Activated CD8-positive, alpha-beta T cell treated with anti-CD3 and anti-CD28 coated beads for 36 hours (primary cell): ENCODE measurements at regions of chr2 and their contacts with region 1.

Region 1: DNA sequence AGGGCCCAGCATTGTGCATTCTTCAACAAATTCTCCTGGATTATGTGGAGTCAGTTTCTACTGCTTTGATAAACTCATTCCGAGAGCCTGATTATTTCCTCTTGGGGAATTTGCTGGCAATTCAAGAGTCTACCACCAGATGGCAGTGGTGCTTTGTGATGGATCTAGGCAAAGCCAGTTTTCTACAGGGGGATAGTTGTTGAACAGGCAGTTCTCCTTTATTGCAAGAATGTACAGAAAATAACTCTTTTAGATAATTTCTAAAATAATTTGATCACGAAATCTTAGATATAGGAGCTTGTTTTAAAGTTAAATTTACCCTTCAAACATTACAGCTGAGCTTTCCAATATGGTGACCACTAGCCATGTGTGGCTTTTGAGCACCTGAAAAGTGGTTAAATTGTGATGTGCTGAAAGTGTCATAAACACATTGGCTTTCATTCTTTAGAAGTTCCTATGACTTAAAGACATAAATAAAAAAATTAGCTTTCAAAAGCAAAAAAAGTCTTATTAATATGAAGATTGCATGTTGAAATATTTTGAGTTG is 66.7 kb upstream of the HAAO start:
- DNase-seq: peak; percentile 87
- ATAC-seq: peak; percentile 79
- H3K4me3 Mint-ChIP-seq: no peak overlapping the region
- H3K27ac Mint-ChIP-seq: no peak overlapping the region
- H3K4me1 Mint-ChIP-seq: no peaks in the 10 kb centered on the region
- H3K27me3 Mint-ChIP-seq: no peaks in the 10 kb centered on the region
- CTCF ChIP-seq: peak; percentile 99

Region 2: GRCh38 chr2:42754021-42754775 is 104.9 kb before region 1 on chr2:
- CTCF ChIA-PET with region 1: no interaction called
- POLR2A ChIA-PET with region 1: no interaction called
- intact Hi-C with region 1: no loop called
- DNase-seq: no peak
- ATAC-seq: peak; percentile 57
- H3K4me3 Mint-ChIP-seq: no peak overlapping the region
- H3K27ac Mint-ChIP-seq: no peak overlapping the region
- H3K4me1 Mint-ChIP-seq: peaks cover 7% of the 10 kb centered on the region
- H3K27me3 Mint-ChIP-seq: no peaks in the 10 kb centered on the region
- CTCF ChIP-seq: no peak

Region 3: DNA sequence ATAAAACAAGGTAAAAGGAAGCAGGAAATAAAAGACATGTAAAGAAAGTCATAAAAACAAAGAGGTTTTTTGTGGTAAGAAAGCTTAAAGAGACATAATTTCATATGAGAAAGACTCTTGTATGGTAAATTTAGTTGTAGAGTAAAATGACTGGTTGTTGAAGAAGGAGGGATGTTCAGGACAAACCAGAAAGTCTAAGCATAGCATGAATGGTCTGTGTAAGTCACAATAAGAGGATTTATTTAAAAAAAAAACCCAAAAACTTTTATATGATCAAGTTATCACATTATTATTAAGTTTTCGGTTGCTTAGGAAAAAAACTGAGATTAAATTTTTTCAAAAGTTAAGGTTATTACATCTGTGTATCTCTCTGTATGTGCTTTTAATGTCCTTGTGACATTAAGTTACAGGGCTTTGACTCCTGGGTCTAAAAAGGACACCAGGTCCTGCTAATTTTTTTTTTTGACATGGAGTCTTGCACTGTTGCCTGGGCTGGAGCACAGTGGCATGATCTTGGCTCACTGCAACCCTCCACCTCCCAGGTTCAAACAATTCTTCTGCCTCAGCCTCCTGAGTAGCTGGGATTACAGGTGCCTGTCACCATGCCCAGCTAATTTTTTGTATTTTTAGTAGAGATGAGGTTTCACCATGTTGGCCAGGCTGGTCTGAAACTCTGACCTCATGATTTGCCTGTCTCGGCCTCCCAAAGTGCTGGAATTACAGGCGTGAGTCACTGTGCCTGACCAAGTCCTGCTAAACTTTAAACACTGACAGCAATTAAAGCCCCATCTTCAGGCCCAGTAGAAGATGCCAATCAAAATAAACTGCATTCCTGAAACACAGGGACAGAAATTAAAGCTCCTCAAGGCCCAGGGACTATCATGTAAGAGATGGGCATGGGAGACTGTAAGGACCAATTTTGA is 80.9 kb before region 1 on chr2:
- CTCF ChIA-PET with region 1: no interaction called
- POLR2A ChIA-PET with region 1: no interaction called
- intact Hi-C with region 1: no loop called
- DNase-seq: no peak
- ATAC-seq: no peak
- H3K4me3 Mint-ChIP-seq: no peak overlapping the region
- H3K27ac Mint-ChIP-seq: no peak overlapping the region
- H3K4me1 Mint-ChIP-seq: peaks cover 14% of the 10 kb centered on the region
- H3K27me3 Mint-ChIP-seq: no peaks in the 10 kb centered on the region
- CTCF ChIP-seq: no peak

Region 4: DNA sequence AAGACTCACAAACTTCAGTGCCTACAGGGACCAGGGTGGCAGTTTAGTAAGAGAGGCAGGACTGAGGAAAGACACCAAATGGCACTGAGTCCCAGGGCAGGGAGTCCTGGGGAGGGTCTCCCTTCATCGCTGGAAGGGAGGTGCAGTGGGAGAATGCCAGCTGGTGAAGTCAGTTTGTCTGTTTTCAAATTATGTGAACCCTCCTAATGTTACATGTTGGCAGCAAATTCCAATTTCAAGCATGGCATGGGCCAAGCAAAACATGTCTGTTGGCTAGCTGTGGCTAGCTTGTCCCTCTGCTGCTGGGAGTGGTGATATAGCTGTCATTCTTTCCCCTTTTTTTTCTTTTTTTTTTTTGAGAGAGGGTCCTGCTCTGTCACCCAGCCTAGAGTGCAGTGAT is 10.8 kb before region 1 on chr2:
- CTCF ChIA-PET with region 1: interaction called, 24 read pairs
- POLR2A ChIA-PET with region 1: no interaction called
- intact Hi-C with region 1: no loop called
- DNase-seq: no peak
- ATAC-seq: no peak
- H3K4me3 Mint-ChIP-seq: no peak overlapping the region
- H3K27ac Mint-ChIP-seq: no peak overlapping the region
- H3K4me1 Mint-ChIP-seq: no peaks in the 10 kb centered on the region
- H3K27me3 Mint-ChIP-seq: no peaks in the 10 kb centered on the region
- CTCF ChIP-seq: no peak

Region 5: DNA sequence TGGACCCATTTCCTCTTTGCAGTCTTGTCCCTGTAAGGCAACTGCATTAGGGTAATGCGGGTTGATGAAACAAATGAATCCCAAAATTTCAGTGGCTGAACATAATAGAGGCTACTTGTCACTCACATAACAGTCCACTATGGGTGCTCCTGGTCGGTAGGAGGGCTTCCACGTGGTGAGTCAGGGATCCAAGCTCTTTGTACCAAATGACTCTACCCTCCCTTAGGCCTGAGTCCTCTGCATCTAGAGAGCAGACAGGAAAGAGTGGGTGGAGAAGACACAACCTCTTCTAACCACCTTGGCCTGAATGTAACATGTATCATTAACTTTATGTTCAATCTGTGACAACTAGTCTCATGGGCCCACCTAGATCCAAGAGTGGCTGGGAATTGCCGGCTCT is 19.5 kb after region 1 on chr2:
- CTCF ChIA-PET with region 1: interaction called, 19 read pairs
- POLR2A ChIA-PET with region 1: no interaction called
- intact Hi-C with region 1: no loop called
- DNase-seq: peak; percentile 64
- ATAC-seq: peak; percentile 96
- H3K4me3 Mint-ChIP-seq: no peak overlapping the region
- H3K27ac Mint-ChIP-seq: peak overlapping the region; percentile 73
- H3K4me1 Mint-ChIP-seq: peaks cover 29% of the 10 kb centered on the region
- H3K27me3 Mint-ChIP-seq: no peaks in the 10 kb centered on the region
- CTCF ChIP-seq: no peak

Region 6: GRCh38 chr2:42922790-42923579 is 63.9 kb after region 1 on chr2:
- CTCF ChIA-PET with region 1: interaction called, 13 read pairs
- POLR2A ChIA-PET with region 1: no interaction called
- intact Hi-C with region 1: no loop called
- DNase-seq: no peak
- ATAC-seq: no peak
- H3K4me3 Mint-ChIP-seq: no peak overlapping the region
- H3K27ac Mint-ChIP-seq: no peak overlapping the region
- H3K4me1 Mint-ChIP-seq: no peaks in the 10 kb centered on the region
- H3K27me3 Mint-ChIP-seq: no peaks in the 10 kb centered on the region
- CTCF ChIP-seq: no peak